ENCODE measurements at regions of chr17 and their contacts with region 1.

Region 1: DNA sequence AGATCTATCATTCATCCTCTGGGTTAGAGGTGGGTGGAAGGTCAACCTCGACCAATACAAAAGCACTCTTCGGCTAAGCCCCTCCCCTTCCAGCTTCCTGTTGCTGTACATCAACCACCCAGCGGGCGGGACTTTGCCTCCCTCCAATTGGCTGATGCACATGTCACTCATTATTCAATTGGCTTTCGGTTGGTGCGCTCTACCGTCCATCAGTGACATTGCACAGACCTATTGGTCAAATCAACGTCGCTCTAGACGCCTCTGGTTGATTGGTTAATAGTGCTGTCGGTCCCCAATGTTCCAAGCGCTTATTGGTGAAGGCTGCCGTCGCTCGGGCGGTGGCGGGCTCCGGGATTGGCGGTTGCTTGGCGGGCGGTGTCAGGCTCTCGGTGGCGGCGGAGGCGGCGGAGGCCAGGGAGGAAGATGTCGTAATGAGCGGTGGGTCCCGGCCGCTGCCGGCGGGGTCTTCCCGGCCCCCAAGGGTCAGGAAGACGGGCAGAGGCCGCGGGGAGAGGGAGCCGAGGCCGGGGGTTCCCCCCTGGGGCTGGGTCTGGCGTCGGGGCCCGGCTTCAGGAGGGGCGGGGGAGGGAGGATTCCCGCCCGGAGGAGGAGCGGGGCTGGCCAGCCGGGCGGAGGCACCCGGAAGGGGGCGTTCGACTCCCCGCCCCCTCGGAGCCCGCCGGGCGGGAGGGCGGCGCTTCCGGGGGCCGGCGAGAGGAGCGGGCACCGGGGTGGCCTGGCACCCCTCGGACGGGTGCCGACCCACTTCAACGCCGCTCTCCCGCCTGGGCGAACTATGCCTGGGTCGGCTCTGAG is at the start of gene SP2:
- H3K4me3 Mint-ChIP-seq: peak within 1 kb of the TSS; percentile 93
- H3K27ac Mint-ChIP-seq: peak within 1 kb of the TSS; percentile 86
- H3K4me1 Mint-ChIP-seq: peaks cover 46% of the 10 kb centered on the region
- H3K27me3 Mint-ChIP-seq: no peaks in the 10 kb centered on the region

Region 2: GRCh38 chr17:47929218-47930000 is 33.3 kb after region 1 on chr17:
- intact Hi-C with region 1: no loop called
- H3K4me3 Mint-ChIP-seq: no peak overlapping the region
- H3K27ac Mint-ChIP-seq: no peak overlapping the region
- H3K4me1 Mint-ChIP-seq: no peaks in the 10 kb centered on the region
- H3K27me3 Mint-ChIP-seq: no peaks in the 10 kb centered on the region

Region 3: DNA sequence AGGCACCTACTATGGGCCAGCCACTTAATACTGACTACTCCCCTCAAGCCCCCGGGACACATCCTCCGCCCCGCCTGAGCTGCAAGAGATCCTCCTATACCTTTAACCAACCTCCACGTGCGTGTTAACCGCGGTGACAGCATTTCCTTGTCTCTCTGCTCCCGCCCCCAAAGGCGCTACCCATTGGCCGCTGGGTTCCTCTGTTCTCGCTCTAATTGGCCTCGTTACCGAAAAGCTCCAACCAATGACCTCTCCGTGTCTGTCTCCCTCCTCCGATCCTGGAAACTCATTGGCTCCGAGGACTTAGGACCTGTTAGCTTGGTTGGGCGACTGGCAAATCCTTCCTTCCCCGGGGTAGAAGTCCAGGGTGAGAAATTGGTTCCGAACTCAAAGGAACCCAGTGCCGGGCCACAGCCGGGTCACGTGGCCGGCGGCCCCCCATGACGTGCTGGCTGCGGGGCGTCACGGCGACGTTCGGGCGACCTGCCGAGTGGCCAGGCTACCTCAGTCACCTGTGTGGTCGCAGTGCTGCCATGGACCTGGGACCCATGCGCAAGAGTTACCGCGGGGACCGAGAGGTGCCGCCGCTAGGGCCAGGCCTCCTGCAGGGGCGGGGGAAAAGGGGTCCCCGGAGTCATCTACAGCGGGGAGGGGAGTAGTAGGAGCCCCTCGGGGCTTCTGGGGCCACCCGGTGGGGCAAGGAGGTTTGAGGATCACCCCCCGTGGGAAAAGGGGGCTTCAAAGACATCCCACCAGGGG is 45.4 kb after region 1 on chr17 and contains the start of gene PNPO:
- intact Hi-C with region 1: loop called (anchors 2 kb)
- H3K4me3 Mint-ChIP-seq: peak within 1 kb of the TSS; percentile 86
- H3K27ac Mint-ChIP-seq: peak within 1 kb of the TSS; percentile 87
- H3K4me1 Mint-ChIP-seq: peaks cover 65% of the 10 kb centered on the region
- H3K27me3 Mint-ChIP-seq: no peaks in the 10 kb centered on the region

Region 4: GRCh38 chr17:47970704-47971463 is 74.8 kb after region 1 on chr17 and contains the start of gene CDK5RAP3:
- intact Hi-C with region 1: loop called (anchors 2 kb)
- H3K4me3 Mint-ChIP-seq: peak within 1 kb of the TSS; percentile 93
- H3K27ac Mint-ChIP-seq: peak within 1 kb of the TSS; percentile 90
- H3K4me1 Mint-ChIP-seq: peaks cover 27% of the 10 kb centered on the region
- H3K27me3 Mint-ChIP-seq: no peaks in the 10 kb centered on the region

Region 5: GRCh38 chr17:48016112-48016511 is 120.0 kb after region 1 on chr17:
- intact Hi-C with region 1: loop called (anchors 5 kb)
- H3K4me3 Mint-ChIP-seq: no peak overlapping the region
- H3K27ac Mint-ChIP-seq: no peak overlapping the region
- H3K4me1 Mint-ChIP-seq: peaks cover 26% of the 10 kb centered on the region
- H3K27me3 Mint-ChIP-seq: peaks cover 38% of the 10 kb centered on the region

Measured in dendritic cell treated with granulocyte-macrophage colony-stimulating factor and Interleukin-4, amounts not matched to agents 40 ng/mL and 50 ng/mL, for 4 days (primary cell).